ENCODE measurements at regions of chr6 and their contacts with region 1.

Region 1: GRCh38 chr6:86856937-86857563 is 80.3 kb upstream of the HTR1E start:
- DNase-seq: peak; percentile 25
- ATAC-seq: no peak
- H3K4me3 ChIP-seq: no peak overlapping the region
- H3K4me3 Mint-ChIP-seq: no peak overlapping the region
- H3K27ac ChIP-seq: no peak overlapping the region
- H3K27ac Mint-ChIP-seq: no peak overlapping the region
- H3K4me1 ChIP-seq: no peaks in the 10 kb centered on the region
- H3K4me1 Mint-ChIP-seq: no peaks in the 10 kb centered on the region
- H3K27me3 ChIP-seq: peaks cover 0 to 7% (median 2%) of the 10 kb centered on the region in 4 experiments
- H3K27me3 Mint-ChIP-seq: peaks cover 7% of the 10 kb centered on the region
- CTCF ChIP-seq: peak; percentile 84

Region 2: DNA sequence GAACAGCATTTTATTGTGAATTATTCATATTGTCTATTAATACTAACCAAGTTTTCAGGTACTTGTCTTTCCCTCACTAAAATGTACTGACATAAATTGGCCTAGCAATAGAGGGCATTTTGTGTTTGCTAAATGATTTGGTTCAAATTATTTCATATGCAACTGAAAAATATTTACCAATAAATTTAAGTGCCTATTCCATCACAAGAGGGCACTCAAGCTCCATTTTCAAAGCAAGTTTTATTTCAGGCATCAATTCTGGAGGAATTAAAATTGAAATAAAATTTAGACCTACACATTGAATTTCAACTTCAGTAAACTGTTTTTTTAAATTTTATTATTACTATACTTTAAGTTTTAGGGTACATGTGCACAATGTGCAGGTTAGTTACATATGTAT is 1100.1 kb before region 1 on chr6:
- CTCF ChIA-PET with region 1: no interaction called
- POLR2A ChIA-PET with region 1: no interaction called
- intact Hi-C with region 1: loop called (anchors 5 kb)
- DNase-seq: no peak
- ATAC-seq: no peak
- H3K4me3 ChIP-seq: no peak overlapping the region
- H3K4me3 Mint-ChIP-seq: no peak overlapping the region
- H3K27ac ChIP-seq: no peak overlapping the region
- H3K27ac Mint-ChIP-seq: no peak overlapping the region
- H3K4me1 ChIP-seq: no peaks in the 10 kb centered on the region
- H3K4me1 Mint-ChIP-seq: no peaks in the 10 kb centered on the region
- H3K27me3 ChIP-seq: no peaks in the 10 kb centered on the region
- H3K27me3 Mint-ChIP-seq: peaks cover 6% of the 10 kb centered on the region
- CTCF ChIP-seq: peak; percentile 15

Region 3: GRCh38 chr6:85911067-85911466 is 946.0 kb before region 1 on chr6:
- CTCF ChIA-PET with region 1: no interaction called
- POLR2A ChIA-PET with region 1: no interaction called
- intact Hi-C with region 1: no loop called
- DNase-seq: no peak
- ATAC-seq: no peak
- H3K4me3 ChIP-seq: no peak overlapping the region
- H3K4me3 Mint-ChIP-seq: no peak overlapping the region
- H3K27ac ChIP-seq: no peak overlapping the region
- H3K27ac Mint-ChIP-seq: no peak overlapping the region
- H3K4me1 ChIP-seq: no peaks in the 10 kb centered on the region
- H3K4me1 Mint-ChIP-seq: no peaks in the 10 kb centered on the region
- H3K27me3 ChIP-seq: no peaks in the 10 kb centered on the region
- H3K27me3 Mint-ChIP-seq: no peaks in the 10 kb centered on the region
- CTCF ChIP-seq: no peak

Region 4: GRCh38 chr6:86412057-86412456 is 445.0 kb before region 1 on chr6:
- CTCF ChIA-PET with region 1: no interaction called
- POLR2A ChIA-PET with region 1: no interaction called
- intact Hi-C with region 1: no loop called
- DNase-seq: no peak
- ATAC-seq: no peak
- H3K4me3 ChIP-seq: no peak overlapping the region
- H3K4me3 Mint-ChIP-seq: no peak overlapping the region
- H3K27ac ChIP-seq: no peak overlapping the region
- H3K27ac Mint-ChIP-seq: no peak overlapping the region
- H3K4me1 ChIP-seq: no peaks in the 10 kb centered on the region
- H3K4me1 Mint-ChIP-seq: no peaks in the 10 kb centered on the region
- H3K27me3 ChIP-seq: no peaks in the 10 kb centered on the region
- H3K27me3 Mint-ChIP-seq: no peaks in the 10 kb centered on the region
- CTCF ChIP-seq: no peak